Activated naive CD8-positive, alpha-beta T cell treated with anti-CD3 and anti-CD28 coated beads, Interleukin-2, amount 10 ng/mL, durations not matched to agents 7 days and 5 days (primary cell): ENCODE measurements at regions of chr12 and their contacts with region 1.

Region 1: DNA sequence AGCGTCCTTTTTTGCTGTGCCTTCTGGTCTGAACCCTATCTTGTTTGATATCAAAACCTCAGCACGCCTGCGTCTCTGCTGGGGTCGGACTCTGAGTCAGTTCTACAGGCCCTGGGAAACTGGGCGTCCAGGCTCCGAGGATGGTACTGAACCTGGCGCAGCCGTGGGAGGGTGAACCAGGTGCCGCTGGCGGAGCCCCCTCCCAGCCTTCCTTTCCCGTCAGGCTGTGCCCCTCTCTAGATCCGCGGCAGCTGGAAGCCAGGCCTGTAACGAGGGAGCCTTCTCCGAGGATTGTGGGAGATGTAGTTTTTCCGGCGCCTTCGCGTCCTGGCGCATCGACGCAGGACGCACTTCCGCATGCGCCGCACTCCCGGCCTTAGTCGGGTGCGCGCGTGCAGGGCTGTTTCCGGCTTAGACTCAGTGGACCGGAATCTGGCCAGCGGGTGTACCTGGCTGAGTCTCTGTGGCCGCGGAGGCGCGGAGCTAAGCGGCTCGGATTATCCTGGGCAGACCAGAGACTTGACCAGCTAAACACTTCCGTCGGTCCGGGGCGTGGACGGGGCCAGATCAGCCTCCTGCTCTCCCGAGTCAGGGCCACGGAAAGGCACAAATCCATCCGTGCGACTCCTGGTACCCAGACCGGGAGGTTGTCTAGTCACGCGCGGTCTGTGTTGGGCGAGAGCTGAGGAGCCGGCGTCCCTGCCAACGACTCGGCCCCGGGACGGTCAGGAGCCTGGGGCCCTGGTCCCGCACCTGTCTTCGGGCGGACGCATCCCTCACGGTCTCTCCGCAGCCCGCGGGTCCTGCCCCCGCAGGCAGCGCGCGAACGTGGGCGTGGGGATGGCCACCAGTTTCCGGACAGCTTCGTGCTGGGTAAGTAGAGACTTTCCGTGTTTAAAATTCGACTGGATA is at the start of gene ZNF26:
- DNase-seq: peak; percentile 86
- ATAC-seq: peak; percentile 94
- H3K4me3 Mint-ChIP-seq: peak within 1 kb of the TSS; percentile 88
- H3K27ac Mint-ChIP-seq: peak within 1 kb of the TSS; percentile 94
- H3K4me1 Mint-ChIP-seq: peaks cover 19% of the 10 kb centered on the region
- H3K27me3 Mint-ChIP-seq: no peaks in the 10 kb centered on the region
- total RNA-seq, gene ZNF26: 22.5 to 25.5 TPM

Region 2: DNA sequence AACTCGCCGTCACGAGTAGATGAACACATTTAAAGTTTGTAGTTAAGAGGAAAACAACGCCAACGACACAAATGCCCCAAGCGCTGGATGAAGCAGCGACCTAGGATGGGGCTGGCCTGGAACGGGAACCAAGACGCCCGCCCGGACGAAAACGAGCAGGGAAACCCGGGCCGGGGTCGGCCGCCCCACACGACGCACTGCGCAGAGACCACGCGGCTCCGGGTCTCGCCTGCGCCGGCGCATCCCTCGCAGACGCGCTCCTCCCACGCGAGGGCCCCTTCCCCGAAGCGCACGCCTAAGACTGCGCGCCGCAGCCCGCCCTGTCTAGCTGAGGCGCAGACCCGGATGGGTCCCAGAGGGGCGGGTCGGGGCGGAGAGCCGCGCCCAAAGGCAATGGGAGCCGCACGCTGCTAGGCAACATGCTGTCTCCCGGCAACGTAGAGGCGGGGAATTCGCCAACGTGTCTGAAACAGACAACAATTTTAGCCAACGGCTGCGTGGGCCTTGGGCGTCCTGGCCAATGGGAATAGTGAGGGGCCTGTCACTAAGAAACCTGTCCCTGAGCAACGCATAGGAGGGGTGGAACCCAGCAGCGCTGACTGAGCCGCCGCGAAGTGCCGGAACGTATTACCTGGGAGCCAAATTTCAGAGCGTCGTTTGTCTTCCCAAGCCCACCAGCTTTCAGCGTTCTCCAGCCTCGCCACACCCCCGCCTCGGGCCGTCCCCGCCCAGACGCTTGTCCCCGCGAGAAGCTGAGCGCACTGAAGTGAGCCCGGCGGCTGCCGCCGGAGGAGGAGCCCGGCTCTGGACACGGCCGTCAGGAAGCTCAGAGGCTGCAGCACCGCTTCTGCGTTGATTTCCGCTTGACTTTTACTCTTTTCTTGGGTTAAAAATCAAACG is 77.9 kb before region 1 on chr12:
- POLR2A ChIA-PET with region 1: interaction called, 11 read pairs
- DNase-seq: peak; percentile 94
- ATAC-seq: peak; percentile 95
- H3K4me3 Mint-ChIP-seq: peak overlapping the region; percentile 91
- H3K27ac Mint-ChIP-seq: peak overlapping the region; percentile 96
- H3K4me1 Mint-ChIP-seq: peaks cover 9% of the 10 kb centered on the region
- H3K27me3 Mint-ChIP-seq: peaks cover 13% of the 10 kb centered on the region

Region 3: DNA sequence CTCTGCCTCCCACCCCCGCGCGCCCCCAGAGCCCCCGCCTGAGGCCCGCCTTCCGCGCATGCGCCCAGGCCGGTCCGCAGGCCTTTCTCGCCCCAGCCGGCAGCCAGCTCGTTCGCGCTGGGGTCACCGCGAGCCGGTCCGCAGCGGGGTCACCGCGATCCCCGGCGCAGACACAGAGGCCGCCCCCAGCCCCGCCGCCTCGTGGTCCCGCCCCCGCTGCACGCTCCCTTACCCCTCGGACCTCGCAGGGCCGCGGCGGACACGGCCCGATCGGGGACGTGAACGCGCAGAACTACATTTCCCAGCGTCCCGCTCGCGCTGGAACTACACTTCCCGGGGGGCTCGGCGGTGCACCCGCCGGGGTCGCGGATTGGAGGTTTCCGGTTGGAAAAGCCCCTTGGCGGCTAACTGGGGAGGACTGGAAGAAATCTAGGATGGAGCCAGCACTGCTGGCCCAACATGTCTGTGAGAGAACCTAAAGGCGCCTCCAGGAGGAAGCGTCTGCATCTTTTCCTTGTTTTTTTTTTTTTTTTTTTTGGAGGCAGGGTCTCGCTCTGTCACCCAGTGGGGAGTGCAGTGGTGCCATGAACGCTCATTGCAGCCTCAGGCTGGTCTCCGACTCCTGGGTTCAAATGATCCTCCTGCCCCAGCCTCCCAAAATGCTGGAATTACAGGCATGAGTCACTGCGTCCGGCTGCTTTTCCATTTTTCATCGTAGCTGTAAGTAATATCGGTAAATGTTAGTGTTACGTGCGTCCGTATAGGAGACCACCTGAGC is 30.1 kb before region 1 on chr12 and contains the start of gene ZNF605:
- POLR2A ChIA-PET with region 1: interaction called, 17 read pairs
- DNase-seq: peak; percentile 89
- ATAC-seq: peak; percentile 88
- H3K4me3 Mint-ChIP-seq: peak within 1 kb of the TSS; percentile 90
- H3K27ac Mint-ChIP-seq: peak within 1 kb of the TSS; percentile 98
- H3K4me1 Mint-ChIP-seq: peaks cover 16% of the 10 kb centered on the region
- H3K27me3 Mint-ChIP-seq: no peaks in the 10 kb centered on the region
- total RNA-seq, gene ZNF605: 12.3 to 13.6 TPM

Region 4: DNA sequence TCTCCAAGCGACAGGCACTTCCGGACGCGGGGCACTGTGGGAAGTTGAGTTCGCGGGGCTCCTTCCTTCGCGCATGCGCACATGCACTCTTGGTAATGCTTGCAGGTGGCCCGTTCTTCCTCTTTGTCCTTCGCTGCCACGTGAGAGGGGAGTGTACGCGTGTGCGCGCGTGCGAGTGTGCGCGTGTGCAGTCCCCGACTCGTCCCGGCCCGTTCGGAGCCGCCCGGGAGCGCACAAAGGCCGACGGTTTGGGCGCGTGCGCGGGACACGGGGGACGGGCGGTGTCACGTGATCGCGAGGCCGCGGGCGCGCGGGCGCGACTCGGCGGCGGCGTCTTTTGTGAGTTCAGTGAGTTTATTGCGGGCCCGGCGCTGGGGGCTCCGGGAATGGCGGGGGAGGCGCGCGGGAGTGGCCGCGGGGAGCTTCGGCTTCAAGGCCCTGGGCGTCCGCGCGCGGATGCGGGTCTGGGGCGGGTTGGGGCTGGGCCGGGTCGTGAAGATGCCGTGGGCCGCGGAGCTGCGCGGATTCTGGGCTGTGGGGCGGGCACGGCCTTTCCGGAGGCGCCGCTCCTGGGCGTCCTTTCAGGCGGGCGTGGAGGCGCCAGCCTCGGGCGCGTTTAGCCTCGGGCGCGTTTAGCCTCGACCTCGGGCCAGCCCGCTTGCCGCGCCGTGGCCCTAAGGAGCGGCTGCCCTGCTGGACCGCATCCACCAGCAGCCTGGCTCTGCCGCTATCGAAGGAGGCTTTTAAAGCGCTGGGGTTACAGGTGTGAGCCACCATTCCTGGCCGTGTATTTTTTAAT is 51.1 kb after region 1 on chr12 and contains the start of gene ZNF84:
- POLR2A ChIA-PET with region 1: interaction called, 20 read pairs
- DNase-seq: peak; percentile 95
- ATAC-seq: peak; percentile 95
- H3K4me3 Mint-ChIP-seq: peak within 1 kb of the TSS; percentile 86
- H3K27ac Mint-ChIP-seq: peak within 1 kb of the TSS; percentile 97
- H3K4me1 Mint-ChIP-seq: peaks cover 13% of the 10 kb centered on the region
- H3K27me3 Mint-ChIP-seq: no peaks in the 10 kb centered on the region
- total RNA-seq, gene ZNF84: 36.2 to 40.8 TPM

Region 5: DNA sequence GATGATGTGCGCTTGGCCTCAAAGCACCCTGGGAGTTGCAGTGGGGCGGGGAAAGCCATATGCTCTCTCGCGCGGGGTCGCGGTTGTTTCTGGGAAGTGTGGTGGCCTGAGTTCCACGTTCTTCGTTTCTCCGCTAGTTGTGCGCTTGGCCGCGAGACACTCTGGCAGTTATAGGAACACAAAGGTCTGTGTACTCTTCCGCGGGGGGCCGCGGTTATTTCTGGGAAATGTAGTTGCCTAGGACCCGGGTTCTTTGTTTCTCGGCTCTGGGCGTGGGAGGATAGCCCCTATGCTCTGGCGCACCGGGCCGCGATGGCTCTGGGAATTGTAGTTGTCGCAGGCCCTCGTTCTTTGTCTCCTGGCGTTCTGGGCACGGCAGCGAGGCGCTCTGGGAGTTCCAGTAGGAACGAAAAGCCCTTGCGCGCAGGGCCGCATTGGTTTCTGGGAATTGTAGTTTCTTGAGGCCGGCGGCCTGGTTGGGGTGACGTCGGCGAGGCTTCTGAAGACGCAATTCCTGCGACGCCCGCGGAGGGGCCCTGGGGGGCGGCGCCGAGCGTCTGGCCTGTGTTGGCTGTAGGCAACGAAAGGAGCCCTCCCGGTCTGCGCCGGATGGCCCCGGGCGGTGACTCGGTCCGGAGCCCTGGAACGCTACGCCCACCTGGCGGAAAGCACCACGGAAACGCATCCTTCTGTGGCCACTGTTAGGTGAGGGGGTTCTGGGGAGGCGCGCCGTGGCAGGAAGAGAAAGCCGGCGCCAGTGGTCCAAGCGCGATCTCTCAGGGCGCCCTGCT is 94.3 kb after region 1 on chr12 and contains the start of gene ZNF140:
- POLR2A ChIA-PET with region 1: interaction called, 23 read pairs
- DNase-seq: peak; percentile 96
- ATAC-seq: peak; percentile 67
- H3K4me3 Mint-ChIP-seq: no peak within 1 kb of the TSS
- H3K27ac Mint-ChIP-seq: no peak within 1 kb of the TSS
- H3K4me1 Mint-ChIP-seq: peaks cover 4% of the 10 kb centered on the region
- H3K27me3 Mint-ChIP-seq: no peaks in the 10 kb centered on the region
- total RNA-seq, gene ZNF140: 18.2 to 19.8 TPM

Region 6: GRCh38 chr12:133130038-133130807 is 144.0 kb after region 1 on chr12 and contains the starts of genes ZNF10 and ZNF891:
- POLR2A ChIA-PET with region 1: interaction called, 12 read pairs
- DNase-seq: peak; percentile 98
- ATAC-seq: peak; percentile 91
- H3K4me3 Mint-ChIP-seq: peak within 1 kb of the TSS; percentile 95
- H3K27ac Mint-ChIP-seq: peak within 1 kb of the TSS; percentile 99
- H3K4me1 Mint-ChIP-seq: peaks cover 16% of the 10 kb centered on the region
- H3K27me3 Mint-ChIP-seq: no peaks in the 10 kb centered on the region
- total RNA-seq, gene ZNF10: 10.8 to 15.4 TPM
- total RNA-seq, gene ZNF891: 3.9 to 4.0 TPM

Region 7: DNA sequence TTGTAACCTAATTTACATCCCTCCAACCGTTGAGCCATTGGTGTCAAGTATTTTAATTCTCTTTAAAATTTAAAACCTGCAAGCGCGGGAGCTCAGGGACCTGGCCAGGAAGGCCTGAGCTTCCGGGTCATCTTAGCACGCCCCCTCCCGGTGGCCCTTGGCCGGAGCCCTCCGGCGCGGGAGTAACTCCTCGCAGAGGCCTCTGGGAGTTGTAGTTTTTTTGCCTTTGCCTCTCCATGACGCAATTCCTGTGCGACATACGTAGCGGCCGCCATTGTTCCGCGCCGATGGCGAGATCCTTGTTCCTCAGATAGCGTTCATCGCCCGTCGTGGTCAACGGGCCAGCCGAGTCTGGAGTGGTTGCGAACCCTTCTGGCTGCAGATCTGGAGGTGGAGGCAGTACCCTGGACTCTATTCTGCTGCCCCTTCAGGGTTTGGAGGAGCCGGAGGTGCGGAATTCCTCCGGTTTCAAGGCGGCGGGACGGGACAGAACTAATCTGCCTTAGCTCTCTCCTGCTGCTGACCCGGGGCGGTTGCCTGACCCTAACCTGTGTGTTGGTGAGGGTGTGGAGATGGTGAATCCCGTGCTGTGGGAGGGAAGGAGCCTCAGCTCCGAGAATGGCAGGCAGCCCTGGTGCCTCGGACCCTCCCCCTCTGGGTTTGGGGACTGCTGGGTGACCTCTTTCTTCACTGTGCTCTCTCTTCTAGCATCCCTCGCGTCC is 195.1 kb after region 1 on chr12 and contains the start of gene ZNF268:
- POLR2A ChIA-PET with region 1: interaction called, 23 read pairs
- DNase-seq: peak; percentile 91
- ATAC-seq: peak; percentile 90
- H3K4me3 Mint-ChIP-seq: peak within 1 kb of the TSS; percentile 95
- H3K27ac Mint-ChIP-seq: peak within 1 kb of the TSS; percentile 93
- H3K4me1 Mint-ChIP-seq: peaks cover 9% of the 10 kb centered on the region
- H3K27me3 Mint-ChIP-seq: no peaks in the 10 kb centered on the region
- total RNA-seq, gene ZNF268: 24.1 to 25.6 TPM